IMR-90 (cell line): ENCODE measurements at regions of chr16 and their contacts with region 1.

Region 1: DNA sequence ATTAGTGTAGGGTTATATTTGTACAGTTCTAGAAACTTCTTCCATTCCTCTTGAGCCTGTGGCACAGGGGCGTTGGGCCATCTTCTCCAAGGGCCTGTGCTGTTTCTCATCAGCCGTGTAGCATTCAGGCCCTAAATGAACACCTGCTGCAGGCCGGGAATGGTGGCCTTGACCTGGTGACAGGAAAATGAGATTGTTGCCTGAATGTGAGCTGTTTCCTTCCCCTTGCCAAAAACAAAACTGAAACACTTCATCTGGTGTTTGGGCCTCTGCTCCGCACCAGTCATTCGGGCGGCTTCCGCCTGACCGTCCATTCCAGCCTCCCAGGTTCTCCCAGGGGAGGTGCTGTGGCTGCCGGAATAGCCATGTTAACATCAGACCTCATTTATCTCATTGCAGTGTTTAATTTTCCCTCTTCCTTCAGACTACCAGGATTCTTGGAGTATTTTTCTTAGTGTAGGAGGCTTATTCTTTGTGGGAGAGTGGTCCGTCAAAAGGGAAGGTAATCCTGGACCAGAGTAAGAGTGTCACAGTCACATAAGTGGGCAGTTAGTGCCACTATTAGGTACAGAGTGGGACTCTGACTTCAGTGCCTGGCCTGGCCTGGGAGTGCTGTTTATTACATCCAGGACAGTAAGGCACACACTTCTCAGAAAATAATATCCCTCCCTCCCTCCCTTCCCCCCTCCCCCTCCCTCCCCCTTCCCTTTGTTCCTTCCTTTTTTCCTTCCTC is 61.9 kb downstream of the WWP2 start:
- DNase-seq: no peak
- ATAC-seq: no peak
- H3K4me3 ChIP-seq: no peak overlapping the region
- H3K27ac ChIP-seq: no peak overlapping the region
- H3K4me1 ChIP-seq: peaks cover 7% of the 10 kb centered on the region
- H3K27me3 ChIP-seq: no peaks in the 10 kb centered on the region
- CTCF ChIP-seq: no peak
- POLR2A ChIP-seq: no peak
- RAD21 ChIP-seq: no peak

Region 2: GRCh38 chr16:68985855-68986254 is 838.1 kb before region 1 on chr16:
- CTCF ChIA-PET with region 1: no interaction called
- POLR2A ChIA-PET with region 1: no interaction called
- dilution Hi-C with region 1: no loop called
- in situ Hi-C with region 1: no loop called
- intact Hi-C with region 1: no loop called
- DNase-seq: peak; percentile 94
- ATAC-seq: peak; percentile 81
- H3K4me3 ChIP-seq: no peak overlapping the region
- H3K27ac ChIP-seq: peak overlapping the region; percentile 42; the same call in 1 of the 2 replicates
- H3K4me1 ChIP-seq: peaks cover 10% of the 10 kb centered on the region
- H3K27me3 ChIP-seq: no peaks in the 10 kb centered on the region
- CTCF ChIP-seq: no peak
- POLR2A ChIP-seq: no peak
- RAD21 ChIP-seq: no peak

Region 3: GRCh38 chr16:69726296-69727060 is 97.5 kb before region 1 on chr16 and contains the start of gene NQO1:
- CTCF ChIA-PET with region 1: no interaction called
- POLR2A ChIA-PET with region 1: no interaction called
- dilution Hi-C with region 1: no loop called
- in situ Hi-C with region 1: no loop called
- intact Hi-C with region 1: no loop called
- DNase-seq: peak; percentile 97
- ATAC-seq: peak; percentile 91
- H3K4me3 ChIP-seq: peak within 1 kb of the TSS; percentile 58
- H3K27ac ChIP-seq: peak within 1 kb of the TSS; percentile 95
- H3K4me1 ChIP-seq: peaks cover 8% of the 10 kb centered on the region; the same call in 1 of the 2 replicates
- H3K27me3 ChIP-seq: no peaks in the 10 kb centered on the region
- CTCF ChIP-seq: no peak
- POLR2A ChIP-seq: peak; percentile 92
- RAD21 ChIP-seq: no peak
- total RNA-seq, gene NQO1: 404 and 426 TPM in 2 replicates

Region 4: DNA sequence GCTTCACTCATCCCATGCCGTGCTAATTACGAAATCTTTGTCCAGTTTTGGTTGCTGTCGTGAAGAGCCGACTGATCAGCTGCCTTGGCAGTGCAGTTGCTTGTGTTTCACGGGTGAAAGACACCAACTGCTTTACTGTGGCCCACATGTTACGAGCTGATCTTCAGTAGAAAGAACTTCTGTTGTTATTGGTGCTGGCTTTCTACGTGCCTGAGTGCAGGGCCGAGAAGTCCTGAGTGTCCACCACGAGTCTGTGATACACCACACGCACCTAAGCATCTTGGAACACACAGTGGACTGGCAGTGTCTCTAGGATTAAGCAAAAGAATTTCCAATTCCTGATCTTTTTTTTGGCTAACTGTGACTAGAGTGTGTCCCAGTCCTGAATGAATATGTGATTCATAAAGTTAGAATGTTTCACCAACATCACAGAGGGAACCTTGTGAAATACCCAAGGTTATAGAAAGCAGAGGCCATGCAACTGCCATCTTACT is 56.7 kb after region 1 on chr16:
- CTCF ChIA-PET with region 1: no interaction called
- POLR2A ChIA-PET with region 1: no interaction called
- dilution Hi-C with region 1: no loop called
- in situ Hi-C with region 1: loop called (anchors 10 kb)
- intact Hi-C with region 1: no loop called
- DNase-seq: peak; percentile 44
- ATAC-seq: peak; percentile 48
- H3K4me3 ChIP-seq: no peak overlapping the region
- H3K27ac ChIP-seq: no peak overlapping the region
- H3K4me1 ChIP-seq: peaks cover 5% of the 10 kb centered on the region
- H3K27me3 ChIP-seq: no peaks in the 10 kb centered on the region
- CTCF ChIP-seq: no peak
- POLR2A ChIP-seq: no peak
- RAD21 ChIP-seq: no peak